ENCODE measurements at regions of chr10 and their contacts with region 1.

Region 1: GRCh38 chr10:101012525-101013364 is 13.1 kb downstream of the LZTS2 start:
- DNase-seq: peak; percentile 53 to 87
- ATAC-seq: peak; percentile 82 to 84 (median 83)
- H3K4me3 ChIP-seq: no peak overlapping the region
- H3K4me3 Mint-ChIP-seq: no peak overlapping the region
- H3K27ac ChIP-seq: no peak overlapping the region
- H3K27ac Mint-ChIP-seq: peak overlapping the region in 1 of 2 donors; percentile 9
- H3K4me1 ChIP-seq: peaks cover 8% of the 10 kb centered on the region
- H3K4me1 Mint-ChIP-seq: peaks cover 10 to 16% of the 10 kb centered on the region in 2 donors
- H3K27me3 ChIP-seq: peaks cover 8% of the 10 kb centered on the region
- H3K27me3 Mint-ChIP-seq: peaks cover 28 to 34% of the 10 kb centered on the region in 2 donors
- CTCF ChIP-seq: peak; percentile 67

Region 2: DNA sequence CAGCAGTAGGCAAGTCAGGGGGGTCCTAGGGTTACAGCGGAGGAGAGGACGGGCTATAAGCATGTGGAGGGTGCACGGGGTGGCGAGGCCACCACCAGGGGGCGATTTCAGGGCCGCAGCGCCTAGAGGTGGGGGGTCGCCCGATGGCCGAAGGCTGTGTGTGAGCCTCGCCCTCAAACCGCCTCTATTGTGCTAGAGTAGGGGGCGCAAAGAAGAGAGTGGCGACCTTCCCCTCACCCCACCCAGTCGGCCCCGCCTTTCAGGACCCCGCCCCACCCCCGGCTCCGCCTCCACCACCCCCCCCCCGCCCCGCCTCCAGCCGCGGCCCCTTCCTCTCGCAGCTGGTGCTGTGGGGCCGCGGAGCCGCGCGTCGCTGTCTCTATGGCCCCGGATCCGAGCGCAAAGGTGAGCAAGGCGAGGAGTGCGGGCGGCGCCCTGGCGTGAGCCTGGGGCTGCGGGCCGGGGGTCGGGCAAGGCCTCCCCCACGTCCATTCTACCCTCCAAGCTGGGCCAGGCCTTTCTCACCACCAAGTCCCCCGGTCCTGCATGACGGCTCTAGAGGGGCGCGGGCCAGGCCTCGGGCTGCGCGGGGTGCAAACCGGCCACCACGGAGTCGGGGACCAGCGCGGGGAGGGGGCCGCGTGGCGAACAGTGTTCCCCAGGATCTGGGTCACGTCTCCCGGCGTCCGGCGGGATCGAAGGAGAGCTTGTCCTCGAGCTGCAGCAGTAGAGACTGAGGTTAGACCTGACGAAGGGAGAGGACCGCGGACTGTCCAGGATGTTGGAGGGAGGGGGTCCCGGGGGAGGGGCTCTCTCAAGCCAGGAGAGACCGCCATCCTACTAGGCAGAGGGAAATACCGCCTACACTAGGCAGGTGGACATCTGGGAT is 43.3 kb before region 1 on chr10 and contains the start of gene SEMA4G:
- intact Hi-C with region 1: loop called (anchors 1 kb)
- DNase-seq: peak; percentile 45 to 68
- ATAC-seq: peak; percentile 69 to 86 (median 83)
- H3K4me3 ChIP-seq: peak within 1 kb of the TSS; percentile 31
- H3K4me3 Mint-ChIP-seq: peak within 1 kb of the TSS; percentile 81
- H3K27ac ChIP-seq: no peak within 1 kb of the TSS
- H3K27ac Mint-ChIP-seq: peak within 1 kb of the TSS in 1 of 2 donors; percentile 48
- H3K4me1 ChIP-seq: peaks cover 14% of the 10 kb centered on the region
- H3K4me1 Mint-ChIP-seq: peaks cover 9 to 27% of the 10 kb centered on the region in 2 donors
- H3K27me3 ChIP-seq: no peaks in the 10 kb centered on the region
- H3K27me3 Mint-ChIP-seq: no peaks in the 10 kb centered on the region
- CTCF ChIP-seq: peak; percentile 72
- total RNA-seq, gene SEMA4G: 0.53 to 1.7 TPM in 2 of 3 donors, not detected in the other